WTC11 (cell line): ENCODE measurements at regions of chr1 and their contacts with region 1.

Region 1: DNA sequence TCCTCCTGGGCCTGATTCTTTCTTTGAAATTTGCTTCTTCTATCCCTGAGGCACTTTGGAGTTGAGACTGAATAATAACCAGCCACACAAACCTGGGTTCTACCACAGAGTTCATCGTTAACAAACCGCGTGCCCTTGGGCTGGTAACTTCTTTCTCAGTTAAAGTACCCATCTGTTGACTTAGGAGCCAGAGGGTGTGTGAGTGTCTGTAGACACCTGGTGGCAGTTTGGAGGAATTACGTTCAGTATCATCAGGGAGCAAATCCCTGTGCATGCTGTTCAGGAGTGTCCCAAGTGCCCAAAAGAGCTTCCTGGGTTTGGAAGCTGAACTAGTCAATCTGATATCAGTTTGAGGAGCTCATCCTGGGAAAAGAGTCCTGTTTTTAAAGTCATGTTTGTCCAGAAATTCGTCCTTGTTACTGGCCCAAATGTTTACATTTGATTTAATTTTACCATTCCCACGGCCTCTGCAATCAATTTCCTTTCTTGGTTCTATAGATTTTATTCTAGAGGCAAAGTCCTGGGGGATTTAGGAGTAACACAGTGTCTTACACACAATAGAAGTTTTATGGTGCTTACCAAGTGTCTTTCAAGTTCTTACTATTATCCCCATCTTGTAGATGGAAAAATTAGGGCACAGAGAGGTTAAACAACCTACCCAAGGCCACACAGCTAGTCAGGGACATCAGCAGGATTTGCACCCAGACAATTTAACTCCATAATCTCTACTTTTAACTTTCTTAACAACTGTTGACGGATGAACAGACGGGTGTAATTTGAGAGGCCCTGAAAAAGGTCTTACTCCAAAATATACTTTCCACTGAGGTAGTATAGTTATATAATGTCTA is 26.7 kb upstream of the RPTN start:
- DNase-seq: peak; percentile 14
- ATAC-seq: peak; percentile 91
- H3K4me3 Mint-ChIP-seq: no peak overlapping the region
- H3K27ac Mint-ChIP-seq: no peak overlapping the region
- H3K4me1 Mint-ChIP-seq: no peaks in the 10 kb centered on the region
- H3K27me3 Mint-ChIP-seq: peaks cover 6% of the 10 kb centered on the region
- CTCF ChIP-seq: peak; percentile 29; the same call in 1 of the 2 replicates

Region 2: DNA sequence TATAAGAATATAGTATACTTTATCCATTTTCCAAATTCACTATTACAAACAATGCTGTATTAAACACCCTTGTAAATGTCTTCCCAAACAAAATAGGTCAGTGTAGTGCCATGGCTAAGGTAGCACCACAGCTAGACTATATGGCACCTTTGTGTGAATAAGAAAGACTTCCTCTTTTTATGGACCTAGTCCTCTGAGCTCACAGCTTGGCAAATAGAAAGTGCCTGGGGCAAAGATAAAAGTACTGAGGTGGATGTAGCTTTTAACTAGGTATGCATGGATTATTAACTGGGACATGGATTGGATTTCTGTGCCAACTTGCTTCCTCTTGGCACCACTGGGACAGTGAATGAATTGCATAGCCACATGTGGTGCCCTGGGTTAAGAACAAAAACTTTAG is 13.2 kb after region 1 on chr1:
- CTCF ChIA-PET with region 1: no interaction called
- POLR2A ChIA-PET with region 1: no interaction called
- DNase-seq: no peak
- ATAC-seq: no peak
- H3K4me3 Mint-ChIP-seq: no peak overlapping the region
- H3K27ac Mint-ChIP-seq: no peak overlapping the region
- H3K4me1 Mint-ChIP-seq: no peaks in the 10 kb centered on the region
- H3K27me3 Mint-ChIP-seq: peaks cover 9% of the 10 kb centered on the region
- CTCF ChIP-seq: no peak

Region 3: GRCh38 chr1:152459596-152460528 is 274.1 kb after region 1 on chr1:
- CTCF ChIA-PET with region 1: interaction called, 23 read pairs
- POLR2A ChIA-PET with region 1: interaction called, 3 read pairs
- DNase-seq: peak; percentile 47
- ATAC-seq: peak; percentile 34; the same call in 1 of the 2 replicates
- H3K4me3 Mint-ChIP-seq: no peak overlapping the region
- H3K27ac Mint-ChIP-seq: no peak overlapping the region
- H3K4me1 Mint-ChIP-seq: no peaks in the 10 kb centered on the region
- H3K27me3 Mint-ChIP-seq: no peaks in the 10 kb centered on the region; the same call in 1 of the 2 replicates
- CTCF ChIP-seq: peak; percentile 34